ENCODE measurements at regions of chr11 and their contacts with region 1.

Region 1: GRCh38 chr11:107651672-107652071 is 60.2 kb downstream of the SLN start:
- DNase-seq: peak; percentile 29
- ATAC-seq: no peak; the same call in 1 of the 2 replicates
- H3K4me3 ChIP-seq: no peak overlapping the region
- H3K27ac ChIP-seq: no peak overlapping the region
- H3K4me1 ChIP-seq: no peaks in the 10 kb centered on the region
- H3K27me3 ChIP-seq: peaks cover 92% of the 10 kb centered on the region
- CTCF ChIP-seq: peak; percentile 30; the same call in 1 of the 2 replicates

Region 2: DNA sequence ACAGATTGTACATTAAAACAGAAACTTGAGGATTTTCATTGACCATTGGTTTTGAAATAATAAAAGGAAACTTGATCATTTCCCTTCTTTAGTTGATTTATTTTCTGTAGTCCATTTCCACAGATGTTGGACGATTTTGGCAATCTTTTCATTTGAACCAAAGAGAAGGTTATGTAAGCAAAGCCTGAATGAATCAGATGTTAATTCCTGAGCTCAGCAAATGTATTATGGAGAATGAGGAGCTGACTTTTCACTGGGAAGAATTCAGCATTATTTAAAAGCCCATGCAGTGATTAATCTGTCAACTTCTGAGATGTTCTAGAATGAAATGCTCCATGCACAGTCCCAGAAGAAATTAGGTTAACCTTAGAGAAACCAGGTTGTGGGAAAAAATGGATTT is 31.7 kb before region 1 on chr11:
- CTCF ChIA-PET with region 1: no interaction called
- POLR2A ChIA-PET with region 1: no interaction called
- intact Hi-C with region 1: loop called (anchors 5 kb)
- DNase-seq: no peak
- ATAC-seq: no peak
- H3K4me3 ChIP-seq: no peak overlapping the region
- H3K27ac ChIP-seq: no peak overlapping the region
- H3K4me1 ChIP-seq: no peaks in the 10 kb centered on the region
- H3K27me3 ChIP-seq: peaks cover 94% of the 10 kb centered on the region
- CTCF ChIP-seq: no peak

Region 3: DNA sequence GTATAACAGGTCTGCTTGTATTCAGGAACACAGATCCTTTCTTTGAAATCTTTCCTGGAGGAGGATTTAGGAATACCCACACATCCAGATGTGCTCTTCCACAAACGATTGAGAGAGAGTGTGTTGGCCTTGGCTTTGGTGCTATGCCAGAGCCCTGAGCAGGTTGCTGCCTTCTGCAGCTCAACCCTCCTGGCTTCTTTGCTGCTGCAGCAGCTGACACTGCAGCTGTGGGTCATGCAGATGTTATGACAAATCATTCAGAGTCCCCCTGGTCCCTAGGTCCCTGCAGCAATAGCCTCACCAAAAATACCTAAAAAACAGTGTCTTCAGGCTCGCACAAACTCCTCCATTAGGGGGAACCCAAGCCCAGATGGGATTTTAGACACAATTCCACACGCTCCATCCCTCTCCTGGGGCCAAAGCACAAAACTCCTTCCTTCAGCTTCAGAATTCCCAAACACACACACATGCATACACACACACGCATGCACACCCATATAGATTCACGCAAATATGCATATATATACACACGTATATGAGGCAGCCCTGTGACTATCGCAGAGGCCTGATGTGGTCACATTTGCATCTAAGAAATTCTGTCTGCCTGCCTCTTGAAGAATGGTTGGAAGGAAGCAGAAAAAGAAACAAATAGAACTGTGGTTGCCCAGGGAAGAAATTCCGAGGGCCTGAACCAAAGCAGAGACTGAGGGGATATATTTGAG is 24.8 kb after region 1 on chr11:
- CTCF ChIA-PET with region 1: interaction called, 12 read pairs
- POLR2A ChIA-PET with region 1: no interaction called
- intact Hi-C with region 1: no loop called
- DNase-seq: no peak
- ATAC-seq: no peak
- H3K4me3 ChIP-seq: no peak overlapping the region
- H3K27ac ChIP-seq: no peak overlapping the region
- H3K4me1 ChIP-seq: no peaks in the 10 kb centered on the region
- H3K27me3 ChIP-seq: peaks cover 84% of the 10 kb centered on the region
- CTCF ChIP-seq: no peak

Region 4: DNA sequence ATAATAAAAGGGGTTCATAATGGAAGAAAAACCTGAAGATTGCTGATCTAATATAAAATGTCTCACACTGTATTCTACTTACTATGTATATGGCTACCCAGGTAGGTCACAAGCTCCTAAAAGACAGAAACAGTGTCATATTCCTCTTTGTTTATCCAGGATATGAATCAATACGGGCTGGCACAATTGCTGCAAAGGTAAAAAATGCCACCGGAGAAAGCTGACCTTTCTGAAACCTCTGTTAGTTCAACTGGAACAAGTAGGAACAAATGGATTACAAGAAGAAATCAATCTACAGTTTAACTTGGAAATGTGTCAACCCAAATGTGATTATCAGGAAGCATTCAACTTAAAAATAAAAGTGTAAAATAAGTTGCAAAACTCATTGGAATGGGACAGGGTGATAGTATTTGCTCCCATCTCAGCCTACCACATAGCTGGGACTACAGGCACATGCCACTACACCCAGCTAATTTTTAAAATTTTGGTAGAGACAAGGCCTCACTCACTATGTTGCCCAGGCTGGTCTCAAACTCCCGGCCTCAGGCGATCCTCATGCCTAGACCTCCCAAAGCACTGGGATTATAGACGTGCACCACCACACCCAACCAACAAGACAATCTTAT is 179.4 kb after region 1 on chr11:
- CTCF ChIA-PET with region 1: no interaction called
- POLR2A ChIA-PET with region 1: no interaction called
- intact Hi-C with region 1: no loop called
- DNase-seq: peak; percentile 97
- ATAC-seq: peak; percentile 95
- H3K4me3 ChIP-seq: peak overlapping the region; percentile 17; the same call in 1 of the 2 replicates
- H3K27ac ChIP-seq: peak overlapping the region; percentile 73
- H3K4me1 ChIP-seq: peaks cover 39% of the 10 kb centered on the region
- H3K27me3 ChIP-seq: no peaks in the 10 kb centered on the region
- CTCF ChIP-seq: no peak

Region 5: GRCh38 chr11:107928046-107928766 is 276.5 kb after region 1 on chr11 and contains the start of gene RAB39A:
- CTCF ChIA-PET with region 1: no interaction called
- POLR2A ChIA-PET with region 1: interaction called, 11 read pairs
- intact Hi-C with region 1: no loop called
- DNase-seq: peak; percentile 92
- ATAC-seq: peak; percentile 81
- H3K4me3 ChIP-seq: peak within 1 kb of the TSS; percentile 1; the same call in 1 of the 2 replicates
- H3K27ac ChIP-seq: no peak within 1 kb of the TSS
- H3K4me1 ChIP-seq: peaks cover 17% of the 10 kb centered on the region
- H3K27me3 ChIP-seq: peaks cover 29% of the 10 kb centered on the region
- CTCF ChIP-seq: no peak
- total RNA-seq, gene RAB39A: not detected in 2 replicates

Measured in PC-3 (cell line).